Caco-2 (cell line): ENCODE measurements at regions of chr2 and their contacts with region 1.

Region 1: DNA sequence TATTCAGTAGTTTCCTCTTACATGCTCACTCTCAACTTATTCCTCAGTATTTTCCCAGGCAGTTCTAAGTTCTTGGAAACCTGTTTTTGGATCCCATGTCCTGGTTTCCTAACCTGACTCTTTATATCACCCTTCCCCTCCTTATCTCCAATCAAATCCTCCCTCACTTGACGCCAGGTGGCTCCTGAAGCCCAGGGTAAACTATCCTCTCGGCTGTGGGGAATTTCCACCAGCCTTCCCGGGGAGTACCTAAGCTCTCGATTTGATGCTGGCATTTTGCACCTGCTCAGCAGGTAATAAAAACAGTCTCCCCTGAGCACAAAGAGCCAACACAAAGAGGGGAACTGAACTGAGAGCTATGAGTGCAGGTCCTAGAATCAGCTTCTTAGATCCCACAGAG is 538.0 kb downstream of the SLC4A3 start:
- DNase-seq: peak; percentile 50 to 58
- H3K4me3 ChIP-seq: no peak overlapping the region
- H3K4me3 Mint-ChIP-seq: no peak overlapping the region
- H3K27ac Mint-ChIP-seq: no peak overlapping the region
- H3K4me1 ChIP-seq: no peaks in the 10 kb centered on the region
- H3K4me1 Mint-ChIP-seq: no peaks in the 10 kb centered on the region
- H3K27me3 ChIP-seq: no peaks in the 10 kb centered on the region
- H3K27me3 Mint-ChIP-seq: no peaks in the 10 kb centered on the region
- CTCF ChIP-seq: peak in 1 of 2 experiments; percentile 65

Region 2: GRCh38 chr2:220198920-220199319 is 33.5 kb after region 1 on chr2:
- CTCF ChIA-PET with region 1: no interaction called
- POLR2A ChIA-PET with region 1: no interaction called
- intact Hi-C with region 1: loop called (anchors 1 kb)
- DNase-seq: no peak
- H3K4me3 ChIP-seq: no peak overlapping the region
- H3K4me3 Mint-ChIP-seq: no peak overlapping the region
- H3K27ac Mint-ChIP-seq: no peak overlapping the region
- H3K4me1 ChIP-seq: peaks cover 7% of the 10 kb centered on the region
- H3K4me1 Mint-ChIP-seq: peaks cover 18% of the 10 kb centered on the region
- H3K27me3 ChIP-seq: no peaks in the 10 kb centered on the region
- H3K27me3 Mint-ChIP-seq: no peaks in the 10 kb centered on the region
- CTCF ChIP-seq: no peak

Region 3: DNA sequence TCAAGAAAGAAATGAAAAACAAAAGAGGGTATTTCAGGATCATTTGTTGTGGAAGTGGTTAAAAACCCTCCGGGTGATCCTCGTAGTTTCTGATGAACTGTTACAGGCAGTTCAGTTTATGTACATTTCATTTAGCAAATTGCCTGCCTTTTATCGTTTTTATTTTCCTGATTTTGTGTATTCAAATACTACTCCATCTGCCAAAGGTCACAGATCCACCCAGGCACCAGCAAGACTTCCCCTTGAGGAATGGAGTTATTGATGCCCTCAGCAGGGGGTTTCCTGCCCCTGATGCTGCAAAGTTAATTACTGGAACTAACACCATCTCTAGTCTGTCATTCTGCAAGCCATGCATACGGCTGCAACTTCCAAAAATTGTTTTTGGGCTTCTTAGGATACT is 104.0 kb after region 1 on chr2:
- CTCF ChIA-PET with region 1: no interaction called
- POLR2A ChIA-PET with region 1: no interaction called
- intact Hi-C with region 1: no loop called
- DNase-seq: no peak
- H3K4me3 ChIP-seq: no peak overlapping the region
- H3K4me3 Mint-ChIP-seq: no peak overlapping the region
- H3K27ac Mint-ChIP-seq: no peak overlapping the region
- H3K4me1 ChIP-seq: no peaks in the 10 kb centered on the region
- H3K4me1 Mint-ChIP-seq: no peaks in the 10 kb centered on the region
- H3K27me3 ChIP-seq: 0 out of 2 replicates have a peak, but pooled peaks cover 1% of the 10 kb centered on the region
- H3K27me3 Mint-ChIP-seq: peaks cover 9% of the 10 kb centered on the region
- CTCF ChIP-seq: no peak

Region 4: DNA sequence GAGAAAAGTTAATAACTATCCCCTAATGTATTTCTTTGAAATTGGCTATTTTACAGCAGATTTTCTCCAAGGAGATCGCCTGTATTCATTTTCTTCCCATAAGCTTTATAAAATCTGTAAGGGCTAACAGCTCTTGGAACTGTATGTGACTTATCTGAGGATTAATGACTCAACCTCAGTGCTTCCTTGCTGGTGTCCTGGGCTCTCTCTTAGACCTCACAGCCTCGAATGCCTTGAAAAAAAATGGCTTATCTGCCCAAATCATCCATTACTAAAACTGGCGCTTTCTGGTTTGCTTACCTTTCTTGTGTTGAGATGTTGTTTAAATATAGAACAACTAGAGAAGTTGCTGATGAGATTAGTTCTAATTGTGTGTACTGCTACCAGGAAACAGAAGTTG is 175.6 kb after region 1 on chr2:
- CTCF ChIA-PET with region 1: no interaction called
- POLR2A ChIA-PET with region 1: no interaction called
- intact Hi-C with region 1: loop called (anchors 10 kb)
- DNase-seq: no peak
- H3K4me3 ChIP-seq: no peak overlapping the region
- H3K4me3 Mint-ChIP-seq: no peak overlapping the region
- H3K27ac Mint-ChIP-seq: no peak overlapping the region
- H3K4me1 ChIP-seq: no peaks in the 10 kb centered on the region
- H3K4me1 Mint-ChIP-seq: no peaks in the 10 kb centered on the region
- H3K27me3 ChIP-seq: no peaks in the 10 kb centered on the region
- H3K27me3 Mint-ChIP-seq: peaks cover 13% of the 10 kb centered on the region
- CTCF ChIP-seq: no peak